ENCODE measurements at regions of chr1 and their contacts with region 1.

Region 1: GRCh38 chr1:45892068-45892785 is 88.8 kb downstream of the MAST2 start:
- DNase-seq: peak; percentile 98
- ATAC-seq: peak; percentile 94
- H3K4me3 ChIP-seq: peak overlapping the region; percentile 33
- H3K27ac ChIP-seq: peak overlapping the region; percentile 56
- H3K4me1 ChIP-seq: peaks cover 20% of the 10 kb centered on the region
- H3K27me3 ChIP-seq: no peaks in the 10 kb centered on the region
- CTCF ChIP-seq: no peak

Region 2: GRCh38 chr1:45785583-45785982 is 106.6 kb before region 1 on chr1:
- CTCF ChIA-PET with region 1: no interaction called
- POLR2A ChIA-PET with region 1: interaction called, 17 read pairs
- intact Hi-C with region 1: no loop called
- DNase-seq: no peak
- ATAC-seq: no peak
- H3K4me3 ChIP-seq: no peak overlapping the region
- H3K27ac ChIP-seq: no peak overlapping the region
- H3K4me1 ChIP-seq: no peaks in the 10 kb centered on the region
- H3K27me3 ChIP-seq: no peaks in the 10 kb centered on the region
- CTCF ChIP-seq: no peak

Region 3: DNA sequence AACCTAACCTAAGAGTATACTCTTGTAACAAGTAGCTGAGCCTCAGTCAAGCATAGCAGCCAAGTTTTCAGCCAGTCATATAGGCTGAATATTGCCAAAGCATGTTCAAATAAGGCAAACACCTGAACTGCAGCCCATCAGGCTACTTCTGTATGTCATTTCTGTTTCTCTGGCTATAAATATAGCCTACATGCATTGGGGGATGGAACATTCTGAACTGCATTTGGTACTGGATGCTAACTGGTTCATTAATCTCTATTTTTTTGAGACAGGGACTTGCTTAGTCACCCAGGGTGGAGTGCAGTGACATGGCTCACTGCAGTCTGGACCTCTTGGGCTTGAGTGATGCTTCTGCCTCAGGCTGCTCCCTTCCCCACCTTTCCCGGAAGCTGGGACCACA is 51.5 kb before region 1 on chr1:
- CTCF ChIA-PET with region 1: no interaction called
- POLR2A ChIA-PET with region 1: no interaction called
- intact Hi-C with region 1: no loop called
- DNase-seq: peak; percentile 27
- ATAC-seq: peak; percentile 69
- H3K4me3 ChIP-seq: no peak overlapping the region
- H3K27ac ChIP-seq: no peak overlapping the region
- H3K4me1 ChIP-seq: no peaks in the 10 kb centered on the region; the same call in 1 of the 2 replicates
- H3K27me3 ChIP-seq: no peaks in the 10 kb centered on the region
- CTCF ChIP-seq: no peak

Region 4: GRCh38 chr1:46013581-46013980 is 121.4 kb after region 1 on chr1:
- CTCF ChIA-PET with region 1: no interaction called
- POLR2A ChIA-PET with region 1: interaction called, 11 read pairs
- intact Hi-C with region 1: no loop called
- DNase-seq: no peak
- ATAC-seq: no peak
- H3K4me3 ChIP-seq: no peak overlapping the region
- H3K27ac ChIP-seq: no peak overlapping the region
- H3K4me1 ChIP-seq: no peaks in the 10 kb centered on the region
- H3K27me3 ChIP-seq: no peaks in the 10 kb centered on the region
- CTCF ChIP-seq: no peak

Measured in PC-3 (cell line).